H1 (cell line): ENCODE measurements at regions of chr18 and their contacts with region 1.

Region 1: DNA sequence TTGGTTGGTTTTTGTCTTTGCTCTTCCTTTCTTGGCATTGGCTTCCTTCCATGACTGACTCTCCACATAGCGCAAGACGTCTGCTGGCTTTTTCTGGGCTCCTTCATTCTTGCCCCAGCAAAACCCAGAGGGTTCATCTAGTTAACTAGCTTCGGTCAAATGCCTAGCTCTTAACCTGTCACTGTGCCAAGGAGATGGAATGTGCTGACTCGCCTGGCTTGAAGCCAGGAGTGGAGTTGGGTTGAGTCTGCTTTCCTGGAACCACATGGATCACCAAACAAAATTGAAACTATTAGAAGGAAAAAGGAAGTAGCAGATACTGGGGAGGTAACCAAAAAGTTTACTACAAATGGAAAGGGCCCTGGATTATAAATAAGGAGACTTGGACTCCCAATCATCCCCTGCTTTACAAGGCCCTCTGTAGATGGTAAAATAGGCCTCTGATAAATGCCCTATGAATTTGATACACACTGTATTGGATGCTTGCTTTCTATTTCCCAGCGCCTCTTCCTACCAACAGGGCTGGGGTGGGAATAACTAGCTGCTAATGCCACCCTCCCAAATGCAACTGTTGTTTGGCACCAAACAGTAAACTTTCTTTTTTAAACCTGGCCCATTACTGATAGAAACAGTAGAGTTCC is 11.3 kb downstream of the MALT1 start:
- DNase-seq: no peak
- H3K4me3 ChIP-seq: no peak overlapping the region
- H3K27ac ChIP-seq: no peak overlapping the region
- H3K4me1 ChIP-seq: no peaks in the 10 kb centered on the region; a peak in 1 of 7 replicates
- H3K27me3 ChIP-seq: no peaks in the 10 kb centered on the region
- CTCF ChIP-seq: no peak
- EP300 ChIP-seq: no peak
- POLR2A ChIP-seq: no peak
- RAD21 ChIP-seq: no peak

Region 2: DNA sequence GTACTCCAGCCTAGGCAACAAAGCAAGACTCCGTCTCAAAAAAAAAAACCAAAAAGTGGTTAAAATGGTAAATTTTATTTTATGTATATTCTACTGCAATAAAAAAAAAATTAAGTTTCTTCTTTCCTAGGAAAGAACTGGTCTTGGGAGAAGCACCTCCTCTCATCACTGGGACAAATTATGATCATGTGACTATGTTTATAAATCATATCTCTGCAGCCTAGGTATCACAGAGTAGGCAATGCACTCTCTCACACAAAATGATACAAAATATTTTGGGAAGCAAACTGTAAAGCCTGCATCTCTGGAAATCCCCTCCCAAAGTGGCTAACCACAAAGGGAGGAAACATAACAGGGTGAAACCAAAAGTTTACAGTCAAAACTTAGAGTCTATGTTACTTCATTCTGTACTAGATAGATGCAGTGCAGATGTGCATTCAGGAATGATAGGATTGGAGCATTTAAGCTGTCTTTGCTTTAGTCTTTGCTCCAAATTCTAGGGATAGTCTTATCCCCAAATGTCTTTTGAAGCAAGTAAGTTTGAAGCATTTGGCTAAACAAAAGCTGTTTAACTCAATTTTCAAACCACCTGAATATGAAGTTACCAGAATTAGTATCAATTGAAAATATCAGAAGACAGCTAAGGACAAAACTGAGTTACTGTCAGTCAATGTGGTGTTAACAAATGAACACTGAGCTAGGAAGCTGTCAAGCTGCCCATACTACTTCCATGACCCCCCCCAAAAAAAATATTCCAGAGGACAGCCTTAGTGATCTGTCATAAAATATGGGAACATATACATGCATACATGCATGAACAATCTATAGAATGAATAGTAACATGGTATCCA is 32.4 kb before region 1 on chr18:
- CTCF ChIA-PET with region 1: no interaction called
- POLR2A ChIA-PET with region 1: no interaction called
- DNase-seq: no peak
- H3K4me3 ChIP-seq: no peak overlapping the region
- H3K27ac ChIP-seq: no peak overlapping the region
- H3K4me1 ChIP-seq: no peaks in the 10 kb centered on the region
- H3K27me3 ChIP-seq: no peaks in the 10 kb centered on the region
- CTCF ChIP-seq: no peak
- EP300 ChIP-seq: no peak
- POLR2A ChIP-seq: no peak
- RAD21 ChIP-seq: no peak

Region 3: DNA sequence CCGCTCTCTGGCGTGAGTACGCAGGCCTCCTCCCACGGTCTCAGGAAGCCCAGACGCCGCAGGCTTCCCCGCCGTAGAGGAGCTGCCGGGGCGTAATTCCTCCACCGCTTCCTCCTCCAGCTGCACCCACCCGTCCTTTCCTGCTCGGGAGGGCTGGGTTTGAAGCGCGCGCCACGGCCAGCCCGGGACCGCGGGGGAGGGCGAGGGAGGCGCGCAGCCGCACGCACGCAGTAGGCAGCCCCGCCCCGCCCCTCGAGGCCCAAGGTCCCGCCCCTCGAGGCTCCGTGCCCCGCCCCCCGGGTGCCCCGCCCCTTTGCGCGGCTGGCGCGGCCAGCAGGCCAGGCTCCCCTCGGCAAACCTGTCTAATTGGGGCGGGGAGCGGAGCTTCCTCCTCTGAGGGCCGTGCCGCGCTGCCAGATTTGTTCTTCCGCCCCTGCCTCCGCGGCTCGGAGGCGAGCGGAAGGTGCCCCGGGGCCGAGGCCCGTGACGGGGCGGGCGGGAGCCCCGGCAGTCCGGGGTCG is 11.4 kb before region 1 on chr18 and contains the start of gene MALT1:
- CTCF ChIA-PET with region 1: interaction called, 14 read pairs
- POLR2A ChIA-PET with region 1: interaction called, 20 read pairs
- DNase-seq: peak; percentile 62 to 98
- H3K4me3 ChIP-seq: peak within 1 kb of the TSS; percentile 68 to 88 (median 75)
- H3K27ac ChIP-seq: peak within 1 kb of the TSS; percentile 47; the same call in 1 of the 2 replicates
- H3K4me1 ChIP-seq: peaks cover 0 to 5% (median 2%) of the 10 kb centered on the region in 4 experiments; a peak in 5 of 7 replicates
- H3K27me3 ChIP-seq: no peaks in the 10 kb centered on the region
- CTCF ChIP-seq: no peak
- EP300 ChIP-seq: no peak
- POLR2A ChIP-seq: peak; percentile 70 to 78
- RAD21 ChIP-seq: 0 out of 4 replicates have a peak, but pooled peaks of 1 of the 2 experiments have one; percentile 9
- total RNA-seq, gene MALT1: 25.9 and 26.1 TPM in 2 replicates

Region 4: DNA sequence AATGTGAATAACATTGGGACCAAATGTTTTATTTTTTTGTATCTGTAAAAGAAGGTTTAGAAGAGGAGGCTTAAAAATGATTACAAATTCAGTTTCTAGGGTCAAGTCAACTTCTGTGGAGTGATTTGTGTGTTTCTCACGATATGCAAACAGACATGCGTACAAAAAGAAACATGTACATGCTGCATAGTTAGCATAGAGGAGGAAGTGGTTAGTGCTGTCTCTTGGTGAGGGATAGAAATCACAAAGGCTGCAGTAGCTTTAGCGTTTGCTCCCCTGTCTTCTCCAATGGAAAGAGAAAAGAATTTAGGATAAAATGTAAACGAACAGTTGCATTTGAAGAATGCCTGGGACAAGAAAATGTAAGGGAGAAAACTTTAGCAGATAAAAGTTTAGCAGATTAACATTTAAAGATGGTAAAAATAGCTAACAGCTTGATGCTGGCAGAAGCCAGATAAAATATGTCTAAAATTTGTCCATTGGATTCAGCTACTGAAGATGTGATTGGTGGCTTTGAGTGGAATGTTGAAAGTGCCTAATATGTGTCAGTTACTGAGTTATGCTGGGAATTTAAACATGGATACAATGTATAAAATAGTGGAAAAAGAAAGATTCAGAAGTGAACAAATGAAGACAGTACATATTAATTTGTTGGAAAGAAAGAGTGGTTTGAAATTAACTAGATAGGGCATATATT is 33.7 kb after region 1 on chr18:
- CTCF ChIA-PET with region 1: no interaction called
- POLR2A ChIA-PET with region 1: no interaction called
- DNase-seq: no peak
- H3K4me3 ChIP-seq: no peak overlapping the region
- H3K27ac ChIP-seq: no peak overlapping the region
- H3K4me1 ChIP-seq: 0 out of 7 replicates have a peak, but pooled peaks cover 0 to 2% (median 0%) of the 10 kb centered on the region in 4 experiments
- H3K27me3 ChIP-seq: no peaks in the 10 kb centered on the region
- CTCF ChIP-seq: no peak
- EP300 ChIP-seq: no peak
- POLR2A ChIP-seq: no peak
- RAD21 ChIP-seq: no peak